ENCODE measurements at regions of chr1 and their contacts with region 1.

Region 1: GRCh38 chr1:6554031-6554906 is at the start of gene NOL9:
- DNase-seq: peak; percentile 98 to 99 (median 98)
- ATAC-seq: peak; percentile 98
- H3K4me3 ChIP-seq: peak within 1 kb of the TSS; percentile 99
- H3K27ac ChIP-seq: peak within 1 kb of the TSS; percentile 85
- H3K4me1 ChIP-seq: peaks cover 14 to 24% of the 10 kb centered on the region in 2 experiments; a peak in 4 of 5 replicates
- H3K27me3 ChIP-seq: no peaks in the 10 kb centered on the region
- CTCF ChIP-seq: peak; percentile 96 to 98 (median 98)
- EP300 ChIP-seq: peak; percentile 51
- POLR2A ChIP-seq: peak; percentile 91
- RAD21 ChIP-seq: peak; percentile 70 to 76
- polyA plus RNA-seq, gene NOL9: 5.6 to 10.1 TPM

Region 2: DNA sequence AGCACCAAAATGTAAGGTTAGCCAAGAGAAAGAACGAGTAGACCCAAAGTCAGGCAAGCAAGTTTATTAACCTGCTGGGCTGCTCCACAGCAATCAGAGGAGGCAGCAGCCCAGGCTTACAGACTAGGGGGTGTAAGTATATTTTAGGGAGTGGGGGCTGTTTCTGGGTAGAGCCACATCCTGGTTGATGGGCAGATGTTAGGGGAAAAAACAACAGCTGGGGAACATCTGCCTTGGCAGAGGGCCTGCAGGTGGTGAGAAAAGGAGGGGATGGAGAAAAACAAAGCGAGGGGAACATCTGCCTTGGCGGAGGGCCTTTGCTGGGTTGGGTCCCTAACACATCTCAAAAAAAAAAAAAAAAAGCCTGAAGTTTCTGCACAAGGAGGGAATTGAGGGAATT is 15.8 kb after region 1 on chr1:
- CTCF ChIA-PET with region 1: no interaction called
- POLR2A ChIA-PET with region 1: interaction called, 15 read pairs
- in situ Hi-C with region 1: no loop called
- intact Hi-C with region 1: no loop called
- DNase-seq: no peak
- ATAC-seq: peak; percentile 6; the same call in 2 of the 3 replicates
- H3K4me3 ChIP-seq: no peak overlapping the region
- H3K27ac ChIP-seq: no peak overlapping the region
- H3K4me1 ChIP-seq: peaks cover 0 to 8% of the 10 kb centered on the region in 2 experiments; a peak in 3 of 5 replicates
- H3K27me3 ChIP-seq: peaks cover 8 to 13% of the 10 kb centered on the region in 2 experiments; a peak in 4 of 5 replicates
- CTCF ChIP-seq: no peak
- EP300 ChIP-seq: no peak
- POLR2A ChIP-seq: no peak
- RAD21 ChIP-seq: no peak

Region 3: GRCh38 chr1:6579374-6580118 is 25.3 kb after region 1 on chr1 and contains the start of gene ZBTB48:
- CTCF ChIA-PET with region 1: interaction called, 4 read pairs
- POLR2A ChIA-PET with region 1: interaction called, 4 read pairs
- in situ Hi-C with region 1: no loop called
- intact Hi-C with region 1: loop called (anchors 1 kb)
- DNase-seq: peak; percentile 100
- ATAC-seq: peak; percentile 96
- H3K4me3 ChIP-seq: peak within 1 kb of the TSS; percentile 74
- H3K27ac ChIP-seq: peak within 1 kb of the TSS; percentile 73
- H3K4me1 ChIP-seq: peaks cover 35 to 57% of the 10 kb centered on the region in 2 experiments
- H3K27me3 ChIP-seq: no peaks in the 10 kb centered on the region
- CTCF ChIP-seq: no peak
- EP300 ChIP-seq: no peak
- POLR2A ChIP-seq: peak; percentile 94
- RAD21 ChIP-seq: no peak
- polyA plus RNA-seq, gene ZBTB48: 1.9 to 7.4 TPM

Region 4: GRCh38 chr1:6634371-6635052 is 80.2 kb after region 1 on chr1:
- CTCF ChIA-PET with region 1: interaction called, 3 read pairs
- POLR2A ChIA-PET with region 1: no interaction called
- in situ Hi-C with region 1: no loop called
- intact Hi-C with region 1: loop called (anchors 1 kb)
- DNase-seq: peak; percentile 53 to 68 (median 59)
- ATAC-seq: peak; percentile 91
- H3K4me3 ChIP-seq: no peak overlapping the region
- H3K27ac ChIP-seq: no peak overlapping the region
- H3K4me1 ChIP-seq: peaks cover 0 to 21% of the 10 kb centered on the region in 2 experiments; a peak in 1 of 5 replicates
- H3K27me3 ChIP-seq: no peaks in the 10 kb centered on the region
- CTCF ChIP-seq: peak; percentile 68 to 75 (median 72)
- EP300 ChIP-seq: no peak
- POLR2A ChIP-seq: peak; percentile 50; the same call in 1 of the 2 replicates
- RAD21 ChIP-seq: peak; percentile 25 to 71; a peak in 3 of 4 replicates